Activated B cell treated with CpG ODN at 0.5 μM for 24 hours (primary cell): ENCODE measurements at regions of chr2 and their contacts with region 1.

Region 1: DNA sequence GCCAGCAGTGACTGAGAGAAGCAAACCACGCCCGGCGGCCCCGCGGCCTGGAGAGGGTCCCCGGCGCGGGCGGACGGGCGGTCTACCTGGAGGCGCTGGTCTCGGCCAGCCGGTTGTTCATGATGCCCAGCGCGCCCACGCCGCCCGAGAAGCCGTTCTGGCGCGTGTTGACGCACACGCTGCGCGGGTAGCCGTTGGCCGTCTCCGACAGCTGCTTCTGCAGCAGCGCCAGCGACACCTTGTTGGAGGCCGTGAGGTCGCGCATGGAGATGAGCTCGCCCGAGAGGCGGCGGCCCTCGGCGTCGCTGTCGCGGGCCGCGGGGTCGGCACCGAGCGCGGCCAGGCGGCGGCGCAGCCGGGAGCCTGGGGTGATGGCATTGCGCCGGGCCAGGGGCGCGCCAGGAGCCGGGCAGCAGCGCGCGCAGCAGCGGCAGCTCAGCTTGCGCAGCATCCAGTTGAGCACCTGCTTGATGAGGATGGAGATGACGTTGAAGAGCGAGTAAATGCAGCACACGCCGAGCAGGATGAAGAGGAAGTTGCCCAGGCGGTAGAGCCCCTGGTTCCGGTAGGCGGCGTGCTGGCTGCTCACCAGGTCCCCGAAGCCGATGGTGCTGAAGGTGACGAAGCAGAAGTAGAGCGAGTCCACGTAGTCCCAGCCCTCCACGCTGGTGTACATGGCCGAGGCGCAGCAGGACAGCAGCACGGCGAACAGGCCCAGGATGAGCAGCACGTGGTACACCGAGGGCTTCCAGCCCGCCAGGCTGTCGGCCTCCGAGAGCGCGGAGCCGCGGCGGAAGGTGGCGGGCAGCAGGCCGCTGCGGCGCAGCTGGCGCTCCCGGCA is 118.1 kb downstream of the MSH2 start:
- DNase-seq: peak; percentile 74
- ATAC-seq: peak; percentile 91
- H3K4me3 Mint-ChIP-seq: peak overlapping the region; percentile 85
- H3K27ac Mint-ChIP-seq: peak overlapping the region; percentile 87
- H3K4me1 Mint-ChIP-seq: peaks cover 13% of the 10 kb centered on the region
- H3K27me3 Mint-ChIP-seq: no peaks in the 10 kb centered on the region
- CTCF ChIP-seq: no peak

Region 2: DNA sequence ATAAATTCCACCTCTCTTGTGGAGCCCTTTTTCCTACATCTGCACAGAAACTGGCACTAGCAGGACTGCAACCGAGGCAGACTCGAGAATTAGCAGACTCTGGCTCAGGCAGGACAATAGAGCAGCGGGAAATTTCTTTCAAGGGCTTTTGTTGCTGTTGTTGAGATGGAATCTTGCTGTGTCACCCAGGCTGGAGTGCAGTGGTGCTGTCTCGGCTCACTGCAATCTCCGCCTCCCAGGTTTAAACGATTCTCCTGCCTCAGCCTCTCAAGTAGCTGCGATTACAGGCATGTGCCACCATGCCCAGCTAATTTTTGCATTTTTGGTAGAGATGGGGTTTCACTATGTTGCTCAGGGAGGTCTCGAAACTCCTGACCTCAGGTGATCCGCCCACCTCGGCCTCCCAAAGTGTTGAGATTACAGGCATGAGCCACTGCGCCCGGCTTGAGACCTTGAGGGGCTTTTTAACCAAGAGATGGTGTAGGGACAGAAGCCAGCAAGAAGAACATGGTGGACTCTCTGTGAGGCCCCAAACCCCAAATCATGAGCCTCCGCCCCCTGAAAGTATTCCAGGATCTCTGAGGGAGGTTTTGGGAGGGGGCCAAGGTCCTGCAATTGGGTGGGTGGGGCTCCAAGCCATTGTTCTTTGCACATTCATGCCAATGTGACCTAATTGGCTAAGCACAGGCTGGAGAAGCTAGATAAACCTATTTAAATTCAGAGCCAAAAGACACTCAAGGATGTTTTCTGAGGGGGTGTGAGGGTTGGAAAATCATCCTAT is 186.5 kb before region 1 on chr2:
- CTCF ChIA-PET with region 1: interaction called, 4 read pairs
- POLR2A ChIA-PET with region 1: no interaction called
- intact Hi-C with region 1: loop called (anchors 1 kb)
- DNase-seq: no peak
- ATAC-seq: no peak
- H3K4me3 Mint-ChIP-seq: no peak overlapping the region
- H3K27ac Mint-ChIP-seq: no peak overlapping the region
- H3K4me1 Mint-ChIP-seq: peaks cover 22% of the 10 kb centered on the region
- H3K27me3 Mint-ChIP-seq: no peaks in the 10 kb centered on the region
- CTCF ChIP-seq: no peak

Region 3: DNA sequence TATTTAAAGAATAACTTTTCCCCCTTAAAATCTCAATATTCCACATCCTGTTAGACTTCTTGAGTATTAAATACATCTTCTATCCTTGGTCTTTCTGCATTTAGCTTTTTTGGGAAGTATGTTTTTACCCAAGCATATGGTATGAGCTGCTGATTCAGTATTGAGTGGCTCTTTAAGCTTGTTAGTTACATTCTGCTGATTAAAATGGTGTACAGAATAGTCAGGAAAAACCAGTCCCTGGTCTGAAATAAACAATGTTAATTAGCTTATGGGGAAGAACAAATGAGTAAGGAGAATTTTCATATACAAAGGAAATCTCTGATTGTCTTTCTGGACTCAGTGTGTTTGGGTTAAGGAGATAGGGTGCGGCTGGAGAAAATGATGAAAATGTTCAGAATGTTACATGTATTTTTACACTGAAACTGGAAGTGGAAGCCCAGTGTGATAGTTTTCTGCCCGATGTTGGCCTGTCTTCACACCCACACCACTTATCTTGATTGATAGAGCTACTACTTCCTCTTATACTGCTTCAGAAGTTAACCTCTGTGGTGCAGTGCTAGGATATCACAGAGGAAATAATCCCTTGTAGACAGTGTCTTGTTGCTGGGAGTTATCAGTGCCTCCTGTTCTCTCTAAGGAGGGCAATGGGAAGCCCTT is 34.1 kb before region 1 on chr2:
- CTCF ChIA-PET with region 1: no interaction called
- POLR2A ChIA-PET with region 1: interaction called, 4 read pairs
- intact Hi-C with region 1: loop called (anchors 1 kb)
- DNase-seq: no peak
- ATAC-seq: peak; percentile 82
- H3K4me3 Mint-ChIP-seq: peak overlapping the region; percentile 22
- H3K27ac Mint-ChIP-seq: peak overlapping the region; percentile 74
- H3K4me1 Mint-ChIP-seq: peaks cover 11% of the 10 kb centered on the region
- H3K27me3 Mint-ChIP-seq: no peaks in the 10 kb centered on the region
- CTCF ChIP-seq: no peak

Region 4: GRCh38 chr2:47767880-47768609 is 247.0 kb after region 1 on chr2:
- CTCF ChIA-PET with region 1: interaction called, 36 read pairs
- POLR2A ChIA-PET with region 1: interaction called, 4 read pairs
- intact Hi-C with region 1: loop called (anchors 1 kb)
- DNase-seq: peak; percentile 82
- ATAC-seq: peak; percentile 95
- H3K4me3 Mint-ChIP-seq: peak overlapping the region; percentile 55
- H3K27ac Mint-ChIP-seq: peak overlapping the region; percentile 57
- H3K4me1 Mint-ChIP-seq: peaks cover 6% of the 10 kb centered on the region
- H3K27me3 Mint-ChIP-seq: no peaks in the 10 kb centered on the region
- CTCF ChIP-seq: peak; percentile 97

Region 5: DNA sequence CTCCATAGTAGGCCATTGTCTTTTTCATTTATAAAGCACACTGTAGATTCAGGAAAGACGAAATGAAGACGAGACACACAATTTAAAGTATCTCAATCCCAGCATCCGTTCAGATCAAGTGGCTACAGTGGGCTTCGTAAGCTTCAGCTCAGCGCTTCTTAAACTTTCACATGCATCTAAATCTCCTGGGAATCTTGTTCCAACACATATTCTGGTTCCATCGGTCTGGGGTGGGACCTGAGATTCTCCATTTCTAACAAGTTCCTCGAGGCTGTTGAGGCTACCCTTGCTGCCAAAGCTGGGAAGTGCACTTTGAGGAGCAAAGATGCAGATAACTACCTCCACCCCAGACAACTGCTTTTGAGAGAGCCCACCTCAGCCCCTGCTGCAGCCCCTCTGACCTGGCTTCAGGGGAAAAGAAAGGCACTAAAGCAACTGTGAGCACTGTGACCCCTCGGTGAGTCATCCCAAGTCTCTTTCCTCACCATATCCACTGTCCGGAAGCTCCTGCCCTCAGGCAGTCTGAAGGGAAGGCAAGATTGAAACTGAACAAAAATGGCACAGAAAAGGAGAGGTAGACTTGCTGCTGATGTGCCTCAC is 586.4 kb after region 1 on chr2:
- CTCF ChIA-PET with region 1: no interaction called
- POLR2A ChIA-PET with region 1: no interaction called
- intact Hi-C with region 1: loop called (anchors 1 kb)
- DNase-seq: no peak
- ATAC-seq: no peak
- H3K4me3 Mint-ChIP-seq: no peak overlapping the region
- H3K27ac Mint-ChIP-seq: no peak overlapping the region
- H3K4me1 Mint-ChIP-seq: peaks cover 18% of the 10 kb centered on the region
- H3K27me3 Mint-ChIP-seq: no peaks in the 10 kb centered on the region
- CTCF ChIP-seq: no peak